PC-3 (cell line): ENCODE measurements at regions of chr3 and their contacts with region 1.

Region 1: GRCh38 chr3:21894459-21895340 is 143.7 kb upstream of the ZNF385D start:
- DNase-seq: peak; percentile 66
- ATAC-seq: no peak
- H3K4me3 ChIP-seq: no peak overlapping the region
- H3K27ac ChIP-seq: no peak overlapping the region
- H3K4me1 ChIP-seq: peaks cover 13% of the 10 kb centered on the region; the same call in 1 of the 2 replicates
- H3K27me3 ChIP-seq: no peaks in the 10 kb centered on the region
- CTCF ChIP-seq: peak; percentile 87

Region 2: DNA sequence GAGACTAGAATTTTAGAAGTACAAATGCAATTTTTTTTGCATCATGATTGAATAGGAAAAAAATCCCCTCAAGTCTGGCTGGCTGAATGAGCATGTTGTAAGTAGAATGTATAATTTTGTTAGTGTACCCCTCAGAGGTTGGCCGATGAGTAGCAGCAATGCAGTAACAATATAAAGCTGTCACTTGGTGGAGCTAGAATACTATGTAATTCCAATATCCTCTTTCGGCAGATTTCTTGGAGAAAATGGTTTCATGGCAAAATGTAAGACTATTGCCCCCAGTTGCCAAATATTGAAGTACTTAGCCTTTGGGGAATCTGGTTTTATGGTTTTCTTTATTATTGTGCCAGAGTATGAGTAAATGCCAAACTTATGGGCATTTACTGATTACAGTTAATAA is 1668.9 kb before region 1 on chr3:
- CTCF ChIA-PET with region 1: no interaction called
- POLR2A ChIA-PET with region 1: no interaction called
- intact Hi-C with region 1: loop called (anchors 2 kb)
- DNase-seq: peak; percentile 61
- ATAC-seq: peak; percentile 85
- H3K4me3 ChIP-seq: no peak overlapping the region
- H3K27ac ChIP-seq: no peak overlapping the region
- H3K4me1 ChIP-seq: no peaks in the 10 kb centered on the region
- H3K27me3 ChIP-seq: 0 out of 2 replicates have a peak, but pooled peaks cover 4% of the 10 kb centered on the region
- CTCF ChIP-seq: peak; percentile 70

Region 3: GRCh38 chr3:20340324-20340928 is 1554.3 kb before region 1 on chr3:
- CTCF ChIA-PET with region 1: interaction called, 3 read pairs
- POLR2A ChIA-PET with region 1: no interaction called
- intact Hi-C with region 1: loop called (anchors 1 kb)
- DNase-seq: peak; percentile 82
- ATAC-seq: peak; percentile 85
- H3K4me3 ChIP-seq: no peak overlapping the region
- H3K27ac ChIP-seq: no peak overlapping the region
- H3K4me1 ChIP-seq: no peaks in the 10 kb centered on the region
- H3K27me3 ChIP-seq: no peaks in the 10 kb centered on the region
- CTCF ChIP-seq: peak; percentile 95

Region 4: GRCh38 chr3:21484057-21484827 is 410.5 kb before region 1 on chr3:
- CTCF ChIA-PET with region 1: no interaction called
- POLR2A ChIA-PET with region 1: no interaction called
- intact Hi-C with region 1: loop called (anchors 1 kb)
- DNase-seq: peak; percentile 81
- ATAC-seq: peak; percentile 83
- H3K4me3 ChIP-seq: no peak overlapping the region
- H3K27ac ChIP-seq: no peak overlapping the region
- H3K4me1 ChIP-seq: peaks cover 9% of the 10 kb centered on the region
- H3K27me3 ChIP-seq: no peaks in the 10 kb centered on the region
- CTCF ChIP-seq: peak; percentile 86

Region 5: DNA sequence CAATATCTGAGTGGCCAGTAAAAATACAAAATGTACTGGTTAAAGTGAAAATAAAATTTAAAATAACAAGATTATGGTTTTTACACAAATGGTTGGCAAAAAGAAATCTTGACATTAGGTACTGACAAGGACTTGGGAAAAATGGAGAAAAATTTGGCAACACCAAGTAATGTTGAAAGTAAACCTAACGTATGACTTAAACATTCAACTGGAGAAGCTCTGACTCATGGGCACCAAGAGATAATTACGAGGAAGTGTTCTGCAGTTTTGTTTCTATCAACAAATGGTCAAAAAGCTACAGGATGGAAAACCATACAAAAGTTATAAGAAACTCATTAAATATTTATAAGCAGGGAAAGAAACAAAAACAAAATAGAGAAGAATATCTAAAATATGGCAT is 321.4 kb before region 1 on chr3:
- CTCF ChIA-PET with region 1: no interaction called
- POLR2A ChIA-PET with region 1: no interaction called
- intact Hi-C with region 1: loop called (anchors 10 kb)
- DNase-seq: peak; percentile 18
- ATAC-seq: no peak
- H3K4me3 ChIP-seq: no peak overlapping the region
- H3K27ac ChIP-seq: no peak overlapping the region
- H3K4me1 ChIP-seq: peaks cover 15% of the 10 kb centered on the region; the same call in 1 of the 2 replicates
- H3K27me3 ChIP-seq: no peaks in the 10 kb centered on the region
- CTCF ChIP-seq: no peak

Region 6: GRCh38 chr3:21682206-21682605 is 212.5 kb before region 1 on chr3:
- CTCF ChIA-PET with region 1: interaction called, 3 read pairs
- POLR2A ChIA-PET with region 1: interaction called, 15 read pairs
- intact Hi-C with region 1: no loop called
- DNase-seq: no peak
- ATAC-seq: no peak
- H3K4me3 ChIP-seq: no peak overlapping the region
- H3K27ac ChIP-seq: no peak overlapping the region
- H3K4me1 ChIP-seq: peaks cover 15% of the 10 kb centered on the region
- H3K27me3 ChIP-seq: no peaks in the 10 kb centered on the region
- CTCF ChIP-seq: no peak

Region 7: GRCh38 chr3:21795921-21796320 is 98.8 kb before region 1 on chr3:
- CTCF ChIA-PET with region 1: no interaction called
- POLR2A ChIA-PET with region 1: no interaction called
- intact Hi-C with region 1: no loop called
- DNase-seq: no peak
- ATAC-seq: no peak
- H3K4me3 ChIP-seq: no peak overlapping the region
- H3K27ac ChIP-seq: no peak overlapping the region
- H3K4me1 ChIP-seq: no peaks in the 10 kb centered on the region
- H3K27me3 ChIP-seq: no peaks in the 10 kb centered on the region
- CTCF ChIP-seq: no peak